H1 (cell line): ENCODE measurements at regions of chr11 and their contacts with region 1.

Region 1: GRCh38 chr11:131579932-131580387 is 209.5 kb downstream of the NTM start:
- DNase-seq: peak in 1 of 2 experiments; percentile 75
- H3K4me3 ChIP-seq: no peak overlapping the region
- H3K27ac ChIP-seq: no peak overlapping the region
- H3K4me1 ChIP-seq: peaks cover 3 to 4% (median 4%) of the 10 kb centered on the region in 4 experiments; a peak in 4 of 7 replicates
- H3K27me3 ChIP-seq: no peaks in the 10 kb centered on the region
- CTCF ChIP-seq: peak; percentile 72 to 91 (median 80)
- EP300 ChIP-seq: no peak
- POLR2A ChIP-seq: no peak
- RAD21 ChIP-seq: peak; percentile 74 to 82

Region 2: GRCh38 chr11:131025020-131025419 is 554.9 kb before region 1 on chr11:
- CTCF ChIA-PET with region 1: interaction called, 11 read pairs
- POLR2A ChIA-PET with region 1: no interaction called
- DNase-seq: no peak
- H3K4me3 ChIP-seq: no peak overlapping the region
- H3K27ac ChIP-seq: no peak overlapping the region
- H3K4me1 ChIP-seq: no peaks in the 10 kb centered on the region
- H3K27me3 ChIP-seq: no peaks in the 10 kb centered on the region
- CTCF ChIP-seq: peak; percentile 72 to 93 (median 82)
- EP300 ChIP-seq: no peak
- POLR2A ChIP-seq: no peak
- RAD21 ChIP-seq: peak; percentile 93 to 94

Region 3: DNA sequence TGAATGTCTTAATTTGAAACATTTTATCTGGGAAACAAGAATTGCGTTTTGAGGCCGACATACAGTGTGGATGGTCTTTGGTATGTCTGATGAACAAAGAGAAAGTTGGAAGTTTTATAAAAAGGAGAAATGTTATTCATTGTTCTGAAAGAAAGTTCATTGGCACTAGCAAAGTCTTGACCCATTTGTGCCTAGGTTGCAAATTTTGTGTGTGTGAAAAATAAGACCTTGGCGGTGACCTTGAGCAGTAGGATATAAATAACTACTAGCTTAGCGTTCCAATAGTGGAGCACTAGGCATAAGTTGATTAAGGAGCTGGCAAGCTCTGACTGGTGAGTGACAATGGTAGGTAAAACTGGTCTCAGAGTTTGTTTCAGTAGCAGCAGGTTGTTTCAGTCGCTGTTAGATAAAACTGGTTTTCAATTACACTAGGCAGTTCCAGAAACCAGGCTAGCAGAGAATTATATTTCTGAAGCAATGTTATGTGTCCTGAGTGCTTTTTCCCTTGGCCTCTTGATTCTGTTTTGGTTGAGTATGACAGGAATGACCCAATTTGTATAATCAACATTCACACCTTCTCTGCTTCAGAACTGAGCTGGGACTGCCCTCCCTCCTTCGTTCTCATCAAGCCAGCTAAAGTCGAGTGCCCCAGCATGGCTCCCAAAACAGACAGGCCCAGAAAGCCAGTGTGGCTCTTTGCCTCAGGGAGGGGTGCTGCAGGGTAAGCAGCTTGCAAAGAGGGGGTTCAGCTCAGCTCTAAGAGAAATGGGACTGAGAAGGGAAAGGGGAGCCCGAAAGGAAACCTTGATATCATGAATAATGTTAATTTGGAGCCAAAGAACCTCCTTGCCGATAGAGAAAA is 123.9 kb before region 1 on chr11:
- CTCF ChIA-PET with region 1: no interaction called
- POLR2A ChIA-PET with region 1: no interaction called
- DNase-seq: no peak
- H3K4me3 ChIP-seq: no peak overlapping the region
- H3K27ac ChIP-seq: no peak overlapping the region
- H3K4me1 ChIP-seq: peaks cover 0 to 4% (median 2%) of the 10 kb centered on the region in 4 experiments; a peak in 3 of 7 replicates
- H3K27me3 ChIP-seq: no peaks in the 10 kb centered on the region
- CTCF ChIP-seq: no peak
- EP300 ChIP-seq: no peak
- POLR2A ChIP-seq: no peak
- RAD21 ChIP-seq: no peak

Region 4: DNA sequence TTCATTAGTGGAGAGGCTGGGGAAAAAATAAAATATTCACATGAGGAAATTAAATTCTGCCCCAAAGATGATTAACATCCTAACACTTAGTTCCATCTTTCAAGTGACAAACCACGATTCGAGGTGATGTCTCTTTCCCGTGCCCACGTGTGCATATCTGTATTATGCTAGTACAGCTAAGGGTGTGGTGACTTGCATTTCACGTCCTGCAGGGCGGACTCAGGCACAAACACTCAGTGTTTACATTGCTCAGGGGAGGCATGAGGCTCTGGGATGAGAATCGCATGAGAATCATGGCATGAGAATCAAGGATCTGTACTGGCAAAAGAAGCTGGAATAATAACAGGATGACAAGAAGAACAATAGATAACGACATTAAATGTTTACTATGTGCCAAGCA is 30.2 kb before region 1 on chr11:
- CTCF ChIA-PET with region 1: interaction called, 48 read pairs
- POLR2A ChIA-PET with region 1: no interaction called
- DNase-seq: no peak
- H3K4me3 ChIP-seq: no peak overlapping the region
- H3K27ac ChIP-seq: no peak overlapping the region
- H3K4me1 ChIP-seq: peaks cover 0 to 4% (median 3%) of the 10 kb centered on the region in 4 experiments; a peak in 6 of 7 replicates
- H3K27me3 ChIP-seq: no peaks in the 10 kb centered on the region
- CTCF ChIP-seq: no peak
- EP300 ChIP-seq: no peak
- POLR2A ChIP-seq: no peak
- RAD21 ChIP-seq: no peak

Region 5: DNA sequence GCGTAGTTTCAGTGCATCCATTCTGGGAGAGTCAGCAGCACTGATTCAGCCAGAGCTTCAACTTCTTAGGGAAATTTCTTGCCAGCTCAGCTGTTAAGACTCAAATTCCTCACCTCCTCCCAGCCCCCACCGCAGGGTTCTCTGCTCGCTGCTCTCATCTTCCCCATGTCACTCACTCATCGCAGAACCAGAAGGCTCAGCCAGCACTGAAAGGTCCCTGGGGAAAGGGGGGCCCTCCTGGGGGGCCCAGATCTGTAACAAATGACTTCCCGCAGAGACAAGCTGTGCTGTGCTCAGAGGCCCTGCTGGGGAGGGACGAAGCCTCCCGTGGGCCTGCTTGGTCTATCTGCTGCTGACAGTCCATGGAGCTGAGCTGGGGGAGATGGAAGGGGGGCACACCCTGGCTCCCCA is 11.1 kb after region 1 on chr11:
- CTCF ChIA-PET with region 1: interaction called, 137 read pairs
- POLR2A ChIA-PET with region 1: interaction called, 3 read pairs
- DNase-seq: peak in 1 of 2 experiments; percentile 63
- H3K4me3 ChIP-seq: no peak overlapping the region
- H3K27ac ChIP-seq: no peak overlapping the region
- H3K4me1 ChIP-seq: peaks cover 8 to 21% (median 15%) of the 10 kb centered on the region in 4 experiments
- H3K27me3 ChIP-seq: no peaks in the 10 kb centered on the region; a peak in 2 of 7 replicates
- CTCF ChIP-seq: no peak
- EP300 ChIP-seq: no peak
- POLR2A ChIP-seq: no peak
- RAD21 ChIP-seq: no peak

Region 6: DNA sequence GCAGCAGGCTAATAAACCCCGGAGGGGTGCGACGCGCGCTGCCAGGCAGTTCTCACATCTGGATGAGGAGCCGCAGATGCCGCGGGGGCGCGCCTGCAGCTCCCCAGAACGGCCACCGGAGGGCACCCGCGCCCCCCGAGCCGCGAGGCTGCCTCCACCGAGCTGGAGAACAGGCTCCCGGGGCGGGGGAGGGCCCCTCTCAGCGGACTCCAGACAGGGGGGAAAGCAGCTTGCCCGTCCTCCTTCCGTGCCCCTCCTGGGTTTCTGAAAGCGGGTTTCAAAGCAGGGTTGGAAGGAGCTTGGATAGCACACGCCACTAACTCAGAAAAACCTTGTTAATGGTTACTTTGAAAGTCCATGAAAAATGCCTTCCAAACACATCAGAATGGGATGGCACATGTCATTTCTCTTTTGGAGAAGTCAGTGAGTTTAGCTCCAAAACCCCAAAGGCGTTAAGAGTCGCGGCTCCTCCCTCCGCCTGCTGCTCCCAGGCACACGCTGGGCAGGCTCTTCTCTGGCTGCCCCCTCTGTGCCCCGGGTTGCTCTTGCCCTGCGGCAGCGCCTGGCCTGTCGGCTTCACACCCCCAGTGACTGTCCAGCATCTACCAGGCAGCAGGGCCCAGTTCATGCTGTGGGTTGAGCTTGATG is 108.2 kb after region 1 on chr11:
- CTCF ChIA-PET with region 1: interaction called, 13 read pairs
- POLR2A ChIA-PET with region 1: no interaction called
- DNase-seq: peak; percentile 23 to 93
- H3K4me3 ChIP-seq: peak overlapping the region in 3 of 4 experiments; percentile 16 to 46 (median 24); a peak in 4 of 8 replicates
- H3K27ac ChIP-seq: no peak overlapping the region
- H3K4me1 ChIP-seq: peaks cover 0 to 11% (median 5%) of the 10 kb centered on the region in 4 experiments; a peak in 4 of 7 replicates
- H3K27me3 ChIP-seq: peaks cover 0 to 10% (median 10%) of the 10 kb centered on the region in 4 experiments; a peak in 3 of 7 replicates
- CTCF ChIP-seq: peak; percentile 77 to 93 (median 81)
- EP300 ChIP-seq: 0 out of 3 replicates have a peak, but pooled peaks of 1 of the 2 experiments have one; percentile 30
- POLR2A ChIP-seq: no peak
- RAD21 ChIP-seq: peak; percentile 70 to 80